ENCODE measurements at regions of chr11 and their contacts with region 1.

Region 1: DNA sequence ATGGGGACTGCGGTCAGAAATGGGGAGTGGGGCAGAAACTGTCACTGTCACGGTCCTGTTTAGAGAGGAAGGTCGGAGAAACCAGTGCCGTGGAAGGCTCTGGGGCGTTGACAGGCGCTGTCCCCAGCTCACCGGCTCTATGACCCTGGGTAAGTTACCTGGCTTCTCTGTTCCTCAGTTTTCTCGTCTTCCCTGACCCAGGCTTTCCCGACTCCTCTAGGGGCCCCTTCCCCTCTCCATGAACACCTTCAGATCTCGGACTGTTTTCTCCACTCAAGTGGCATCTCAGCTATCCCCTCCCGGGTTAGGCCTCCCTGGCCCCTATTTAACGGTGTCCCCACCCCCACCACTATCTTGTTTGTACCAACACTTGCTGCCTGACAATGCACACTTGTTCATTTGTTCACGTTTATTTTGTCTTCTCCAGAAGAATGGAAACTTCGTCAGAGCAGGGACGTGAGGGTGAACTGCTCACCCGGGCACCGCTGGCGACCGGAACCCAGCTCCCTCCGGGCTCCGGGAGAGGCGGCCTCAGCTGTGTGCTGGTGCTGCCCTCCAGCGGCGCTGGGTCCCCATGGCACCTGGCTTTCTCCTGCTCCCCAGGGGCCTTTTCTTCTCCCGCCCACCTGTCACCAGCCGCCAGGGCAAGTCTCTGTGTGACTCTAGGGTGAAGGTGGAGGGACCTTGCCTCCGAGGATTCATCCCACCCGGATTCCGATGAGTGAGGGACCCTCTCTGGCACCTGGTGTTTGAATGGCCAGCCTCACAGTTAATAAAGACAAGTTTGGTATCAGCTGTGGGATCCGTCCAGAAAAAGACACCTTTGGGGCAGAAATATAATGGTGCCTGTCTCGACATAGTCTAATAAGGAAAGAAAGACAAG is 33.1 kb upstream of the SLC35C1 start:
- DNase-seq: peak; percentile 81 to 91 (median 88)
- ATAC-seq: peak; percentile 93 to 97 (median 96)
- H3K4me3 ChIP-seq: peak overlapping the region; percentile 18 to 65 (median 56)
- H3K27ac ChIP-seq: peak overlapping the region; percentile 45 to 84 (median 72)
- H3K4me1 ChIP-seq: peaks cover 0 to 9% (median 4%) of the 10 kb centered on the region in 12 donors
- H3K27me3 ChIP-seq: no peaks in the 10 kb centered on the region
- CTCF ChIP-seq: peak; percentile 90 to 97 (median 94)
- POLR2A ChIP-seq: peak in 1 of 2 donors; percentile 21

Region 2: DNA sequence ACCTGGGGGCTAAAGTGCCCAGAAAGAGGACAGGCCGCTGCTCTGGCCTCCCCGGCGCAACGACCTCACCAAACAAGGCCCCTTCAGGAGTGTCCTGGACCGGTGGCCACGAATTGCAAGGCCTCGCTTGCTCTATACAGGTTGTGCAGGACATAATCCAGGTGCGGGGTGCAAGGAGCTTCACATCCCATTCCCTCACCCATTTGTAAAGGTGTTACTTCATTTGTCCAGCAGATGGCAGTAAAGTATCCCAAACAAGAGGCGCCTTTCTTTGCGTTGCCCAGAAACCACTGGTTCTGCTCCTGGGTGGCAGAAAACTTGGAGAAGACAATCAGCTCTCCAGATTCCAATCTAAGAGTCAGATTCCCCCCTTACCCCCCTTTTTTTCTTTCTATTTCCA is 661.2 kb before region 1 on chr11:
- intact Hi-C with region 1: loop called in 2 of 10 experiments (anchors 10 kb)
- DNase-seq: peak in 3 of 5 donors; percentile 24 to 48 (median 45)
- ATAC-seq: peak; percentile 37 to 77 (median 68)
- H3K4me3 ChIP-seq: no peak overlapping the region
- H3K27ac ChIP-seq: no peak overlapping the region
- H3K4me1 ChIP-seq: peaks cover 0 to 3% (median 0%) of the 10 kb centered on the region in 12 donors
- H3K27me3 ChIP-seq: peaks cover 0 to 13% (median 0%) of the 10 kb centered on the region in 9 donors
- CTCF ChIP-seq: peak; percentile 68 to 89 (median 82)
- POLR2A ChIP-seq: no peak

Region 3: DNA sequence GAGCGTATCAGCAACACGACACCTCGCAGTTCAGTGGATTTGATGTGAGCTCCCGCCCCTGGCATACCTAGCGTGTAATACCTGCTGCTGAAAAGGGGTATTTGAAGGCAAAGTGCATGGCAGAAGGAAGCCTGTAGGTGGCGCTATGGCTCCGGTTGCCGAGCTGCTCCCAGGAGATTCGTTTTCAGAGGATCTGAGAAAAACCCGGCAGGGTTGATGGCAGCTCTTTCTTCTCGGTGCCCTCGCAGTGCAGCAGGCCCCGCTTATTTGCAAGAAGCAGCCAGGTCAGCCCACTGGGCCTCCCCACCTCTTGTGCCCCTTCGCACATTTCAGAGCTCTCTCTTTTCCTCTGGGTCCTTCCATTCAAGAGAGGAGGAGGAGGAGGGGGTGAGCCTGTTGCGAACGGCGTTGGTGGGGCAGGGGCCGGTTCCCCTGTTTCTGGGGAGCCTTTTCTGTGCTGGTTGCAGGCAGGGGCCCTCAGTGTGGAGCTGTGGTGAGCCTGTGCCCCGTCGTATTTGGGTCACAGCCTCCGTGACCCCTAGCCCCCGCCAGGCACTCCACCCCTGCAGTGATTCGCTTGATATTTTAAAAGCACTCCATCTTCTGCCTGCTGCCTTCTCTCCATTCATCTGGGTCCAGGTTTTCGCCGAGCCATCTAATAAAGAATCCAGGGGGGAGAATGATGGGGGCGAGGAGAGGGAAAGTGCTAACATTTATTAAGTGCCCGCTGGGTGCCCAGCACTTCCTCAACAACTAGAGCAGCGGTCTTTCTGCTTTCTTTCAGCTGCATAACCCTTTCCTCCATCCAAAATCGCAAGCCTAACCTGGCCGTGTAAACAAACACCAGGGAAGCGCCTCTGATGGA is 400.3 kb before region 1 on chr11:
- intact Hi-C with region 1: loop called (anchors 1 to 5 kb)
- DNase-seq: peak; percentile 44 to 71 (median 47)
- ATAC-seq: peak; percentile 35 to 75 (median 60)
- H3K4me3 ChIP-seq: peak overlapping the region in 2 of 12 donors; percentile 6 to 15
- H3K27ac ChIP-seq: no peak overlapping the region
- H3K4me1 ChIP-seq: peaks cover 0 to 7% (median 0%) of the 10 kb centered on the region in 12 donors
- H3K27me3 ChIP-seq: peaks cover 0 to 24% (median 4%) of the 10 kb centered on the region in 9 donors
- CTCF ChIP-seq: peak; percentile 77 to 94 (median 90)
- POLR2A ChIP-seq: no peak

Region 4: GRCh38 chr11:45538363-45538762 is 233.4 kb before region 1 on chr11:
- intact Hi-C with region 1: loop called in 5 of 10 experiments (anchors 2 to 10 kb)
- DNase-seq: no peak
- ATAC-seq: peak; percentile 45 to 90 (median 87)
- H3K4me3 ChIP-seq: no peak overlapping the region
- H3K27ac ChIP-seq: no peak overlapping the region
- H3K4me1 ChIP-seq: no peaks in the 10 kb centered on the region
- H3K27me3 ChIP-seq: peaks cover 0 to 17% (median 3%) of the 10 kb centered on the region in 9 donors
- CTCF ChIP-seq: peak in 9 of 12 donors; percentile 11 to 51 (median 26)
- POLR2A ChIP-seq: no peak

Region 5: GRCh38 chr11:45560155-45560912 is 211.5 kb before region 1 on chr11:
- intact Hi-C with region 1: loop called in 1 of 10 experiments (anchors 5 kb)
- DNase-seq: peak in 4 of 5 donors; percentile 31 to 66 (median 44)
- ATAC-seq: peak in 2 of 4 donors; percentile 17 to 34
- H3K4me3 ChIP-seq: no peak overlapping the region
- H3K27ac ChIP-seq: no peak overlapping the region
- H3K4me1 ChIP-seq: peaks cover 0 to 16% (median 11%) of the 10 kb centered on the region in 12 donors
- H3K27me3 ChIP-seq: no peaks in the 10 kb centered on the region
- CTCF ChIP-seq: no peak
- POLR2A ChIP-seq: no peak

Region 6: DNA sequence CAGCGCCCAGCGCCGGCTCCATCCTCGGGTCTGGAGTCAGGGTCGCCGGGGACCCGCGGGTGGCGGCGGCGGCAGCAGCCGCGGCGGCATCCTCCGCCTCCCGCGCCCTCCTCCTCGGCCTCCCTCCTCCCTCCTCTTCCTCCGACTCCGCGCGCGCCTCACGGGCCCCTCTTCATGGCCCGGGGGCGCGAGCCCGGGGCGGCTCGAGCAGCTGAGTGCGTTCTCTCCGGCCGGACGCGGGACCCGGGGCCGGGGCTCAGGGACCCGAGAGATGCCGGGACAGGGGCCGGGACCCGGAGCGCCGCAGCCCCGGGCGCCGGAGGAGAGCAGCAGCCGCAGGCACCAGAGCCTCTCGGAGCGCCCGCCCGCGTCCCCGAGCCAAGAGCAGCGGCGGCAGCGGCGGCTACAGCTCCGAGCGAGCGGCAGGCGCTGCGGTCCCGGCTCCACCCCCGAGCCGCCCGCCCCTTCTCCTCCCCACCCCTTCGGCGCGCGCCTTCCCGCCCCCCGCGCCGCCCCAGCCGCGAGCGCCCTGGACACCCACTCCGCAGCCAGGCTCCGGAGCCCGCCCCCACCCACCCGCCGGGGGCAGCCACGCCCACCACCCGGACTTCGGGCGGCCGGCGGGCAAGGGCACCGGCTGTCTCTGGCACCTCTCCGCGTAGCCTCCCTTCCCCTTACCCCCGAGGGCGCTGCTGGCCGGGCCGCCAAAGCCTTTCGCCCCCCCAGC is 106.4 kb before region 1 on chr11 and contains the start of gene CHST1:
- intact Hi-C with region 1: loop called in 5 of 10 experiments (anchors 2 to 5 kb)
- DNase-seq: peak; percentile 47 to 84 (median 61)
- ATAC-seq: peak in 3 of 4 donors; percentile 54 to 86 (median 77)
- H3K4me3 ChIP-seq: peak within 1 kb of the TSS; percentile 62 to 89 (median 78)
- H3K27ac ChIP-seq: peak within 1 kb of the TSS in 9 of 12 donors; percentile 27 to 69 (median 39)
- H3K4me1 ChIP-seq: peaks cover 0 to 35% (median 18%) of the 10 kb centered on the region in 12 donors
- H3K27me3 ChIP-seq: peaks cover 0 to 66% (median 5%) of the 10 kb centered on the region in 9 donors
- CTCF ChIP-seq: no peak
- POLR2A ChIP-seq: peak in 1 of 2 donors; percentile 57
- total RNA-seq, gene CHST1: 0.59 to 6.5 (median 1.8) TPM